Activated naive CD4-positive, alpha-beta T cell treated with anti-CD3 and anti-CD28 coated beads for 36 hours (primary cell): ENCODE measurements at regions of chr9 and their contacts with region 1.

Region 1: DNA sequence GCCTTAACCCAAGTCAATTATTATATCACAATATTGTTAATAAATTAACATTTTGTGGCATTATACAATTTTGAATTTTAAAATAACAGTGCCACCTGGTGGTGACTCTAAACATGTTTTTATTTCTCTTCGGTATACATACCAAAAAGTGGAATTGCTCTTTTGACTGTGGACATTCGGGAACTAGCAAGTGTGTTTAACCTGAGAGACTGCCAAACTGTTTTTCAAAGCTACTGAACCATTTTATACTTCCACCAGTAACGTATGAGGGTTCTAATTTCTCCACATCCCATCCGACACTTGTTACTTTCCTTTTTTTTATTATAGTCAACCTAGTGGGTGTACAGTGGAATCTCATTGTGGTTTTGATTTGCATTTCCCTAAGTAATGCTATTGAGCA is 18.3 kb upstream of the HSDL2 start:
- DNase-seq: no peak
- H3K4me3 Mint-ChIP-seq: no peak overlapping the region
- H3K27ac Mint-ChIP-seq: no peak overlapping the region
- H3K4me1 Mint-ChIP-seq: peaks cover 12% of the 10 kb centered on the region
- H3K27me3 Mint-ChIP-seq: no peaks in the 10 kb centered on the region

Region 2: DNA sequence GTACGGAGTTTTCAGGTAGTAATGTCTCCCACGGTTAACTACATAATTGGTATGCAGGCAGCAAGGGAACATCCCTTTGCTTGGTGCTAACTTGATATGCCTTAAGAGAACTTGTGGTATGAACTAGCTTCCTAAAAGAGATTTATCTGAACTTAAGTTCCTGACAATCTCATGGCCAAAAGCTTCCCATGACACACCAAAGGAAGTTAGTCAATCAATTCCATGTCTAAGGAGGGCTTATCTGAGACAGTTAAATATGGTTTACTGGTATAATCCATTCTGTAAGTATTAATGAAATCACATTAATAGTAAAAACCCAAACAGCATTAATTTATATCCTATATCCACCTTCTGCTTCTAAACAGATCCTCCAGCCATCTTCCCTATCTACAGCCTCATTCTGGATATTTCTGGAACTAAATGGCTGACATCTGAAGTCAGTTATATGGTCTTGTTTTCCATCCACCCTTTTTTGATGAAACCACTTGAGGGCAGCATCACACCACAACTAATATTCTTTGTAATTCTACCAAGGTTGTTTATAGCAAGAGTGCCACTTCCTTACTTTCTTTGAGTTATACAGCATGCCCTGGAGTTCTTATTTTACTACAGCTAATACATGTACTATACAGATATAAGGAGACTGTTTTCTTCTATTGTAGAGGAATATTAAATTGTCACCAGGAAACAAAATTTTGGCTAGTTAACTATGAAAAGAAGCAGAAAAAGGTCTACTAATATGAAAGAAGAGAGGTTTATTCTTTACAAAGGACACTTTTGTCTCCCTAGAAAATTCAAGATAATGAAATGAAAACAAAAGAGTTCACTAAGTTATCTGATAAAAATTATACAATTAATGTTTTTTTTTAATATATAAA is 601.6 kb before region 1 on chr9:
- CTCF ChIA-PET with region 1: interaction called, 7 read pairs
- intact Hi-C with region 1: loop called (anchors 1 kb)
- DNase-seq: peak; percentile 71
- H3K4me3 Mint-ChIP-seq: no peak overlapping the region
- H3K27ac Mint-ChIP-seq: no peak overlapping the region
- H3K4me1 Mint-ChIP-seq: peaks cover 4% of the 10 kb centered on the region
- H3K27me3 Mint-ChIP-seq: no peaks in the 10 kb centered on the region

Region 3: GRCh38 chr9:112086627-112087026 is 275.0 kb before region 1 on chr9:
- CTCF ChIA-PET with region 1: interaction called, 33 read pairs
- intact Hi-C with region 1: loop called (anchors 1 kb)
- DNase-seq: no peak
- H3K4me3 Mint-ChIP-seq: no peak overlapping the region
- H3K27ac Mint-ChIP-seq: no peak overlapping the region
- H3K4me1 Mint-ChIP-seq: no peaks in the 10 kb centered on the region
- H3K27me3 Mint-ChIP-seq: no peaks in the 10 kb centered on the region

Region 4: GRCh38 chr9:112091810-112092209 is 269.8 kb before region 1 on chr9:
- CTCF ChIA-PET with region 1: interaction called, 56 read pairs
- intact Hi-C with region 1: loop called (anchors 1 kb)
- DNase-seq: peak; percentile 57
- H3K4me3 Mint-ChIP-seq: no peak overlapping the region
- H3K27ac Mint-ChIP-seq: no peak overlapping the region
- H3K4me1 Mint-ChIP-seq: peaks cover 10% of the 10 kb centered on the region
- H3K27me3 Mint-ChIP-seq: no peaks in the 10 kb centered on the region

Region 5: GRCh38 chr9:112112941-112113681 is 248.5 kb before region 1 on chr9:
- CTCF ChIA-PET with region 1: interaction called, 34 read pairs
- intact Hi-C with region 1: loop called (anchors 1 kb)
- DNase-seq: peak; percentile 45
- H3K4me3 Mint-ChIP-seq: no peak overlapping the region
- H3K27ac Mint-ChIP-seq: no peak overlapping the region
- H3K4me1 Mint-ChIP-seq: no peaks in the 10 kb centered on the region
- H3K27me3 Mint-ChIP-seq: no peaks in the 10 kb centered on the region

Region 6: GRCh38 chr9:112421771-112422222 is 60.2 kb after region 1 on chr9:
- CTCF ChIA-PET with region 1: no interaction called
- intact Hi-C with region 1: no loop called
- DNase-seq: no peak
- H3K4me3 Mint-ChIP-seq: no peak overlapping the region
- H3K27ac Mint-ChIP-seq: no peak overlapping the region
- H3K4me1 Mint-ChIP-seq: no peaks in the 10 kb centered on the region
- H3K27me3 Mint-ChIP-seq: no peaks in the 10 kb centered on the region